B cell (primary cell): ENCODE measurements at regions of chr2 and their contacts with region 1.

Region 1: DNA sequence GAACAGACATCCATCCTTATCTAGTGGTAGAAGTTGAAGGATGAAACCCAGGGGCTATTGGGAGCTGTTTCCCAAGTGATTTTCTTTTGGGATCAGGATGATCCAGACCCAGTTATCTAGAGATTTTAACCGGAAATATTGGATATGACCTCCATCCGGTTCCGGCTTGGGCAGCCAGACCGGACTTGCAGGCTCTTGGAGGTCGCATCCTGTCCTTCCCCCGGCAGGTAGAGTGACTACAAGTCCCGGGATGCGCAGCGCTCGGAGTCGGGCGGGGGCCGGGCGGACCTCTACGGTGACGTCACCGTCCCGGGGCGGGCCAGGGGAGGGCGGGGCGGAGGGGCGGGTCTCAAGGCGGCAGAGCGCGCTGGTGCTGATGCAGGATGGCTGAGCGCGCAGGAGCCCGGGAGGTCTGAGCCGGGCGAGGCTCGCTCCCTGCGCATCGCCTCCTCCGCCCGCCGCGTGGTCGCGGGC is at the start of gene KIF5C:
- DNase-seq: peak; percentile 88
- ATAC-seq: peak; percentile 92
- H3K4me3 ChIP-seq: peak within 1 kb of the TSS in 4 of 5 experiments; percentile 37 to 67 (median 58)
- H3K4me3 Mint-ChIP-seq: peak within 1 kb of the TSS; percentile 86
- H3K27ac ChIP-seq: no peak within 1 kb of the TSS
- H3K27ac Mint-ChIP-seq: peak within 1 kb of the TSS; percentile 32
- H3K4me1 ChIP-seq: peaks cover 18 to 24% of the 10 kb centered on the region in 2 donors
- H3K4me1 Mint-ChIP-seq: peaks cover 16% of the 10 kb centered on the region
- H3K27me3 ChIP-seq: peaks cover 0 to 38% (median 14%) of the 10 kb centered on the region in 4 experiments
- H3K27me3 Mint-ChIP-seq: peaks cover 43% of the 10 kb centered on the region
- CTCF ChIP-seq: no peak
- total RNA-seq, gene KIF5C: 6.0 and 6.1 TPM in 2 replicates

Region 2: DNA sequence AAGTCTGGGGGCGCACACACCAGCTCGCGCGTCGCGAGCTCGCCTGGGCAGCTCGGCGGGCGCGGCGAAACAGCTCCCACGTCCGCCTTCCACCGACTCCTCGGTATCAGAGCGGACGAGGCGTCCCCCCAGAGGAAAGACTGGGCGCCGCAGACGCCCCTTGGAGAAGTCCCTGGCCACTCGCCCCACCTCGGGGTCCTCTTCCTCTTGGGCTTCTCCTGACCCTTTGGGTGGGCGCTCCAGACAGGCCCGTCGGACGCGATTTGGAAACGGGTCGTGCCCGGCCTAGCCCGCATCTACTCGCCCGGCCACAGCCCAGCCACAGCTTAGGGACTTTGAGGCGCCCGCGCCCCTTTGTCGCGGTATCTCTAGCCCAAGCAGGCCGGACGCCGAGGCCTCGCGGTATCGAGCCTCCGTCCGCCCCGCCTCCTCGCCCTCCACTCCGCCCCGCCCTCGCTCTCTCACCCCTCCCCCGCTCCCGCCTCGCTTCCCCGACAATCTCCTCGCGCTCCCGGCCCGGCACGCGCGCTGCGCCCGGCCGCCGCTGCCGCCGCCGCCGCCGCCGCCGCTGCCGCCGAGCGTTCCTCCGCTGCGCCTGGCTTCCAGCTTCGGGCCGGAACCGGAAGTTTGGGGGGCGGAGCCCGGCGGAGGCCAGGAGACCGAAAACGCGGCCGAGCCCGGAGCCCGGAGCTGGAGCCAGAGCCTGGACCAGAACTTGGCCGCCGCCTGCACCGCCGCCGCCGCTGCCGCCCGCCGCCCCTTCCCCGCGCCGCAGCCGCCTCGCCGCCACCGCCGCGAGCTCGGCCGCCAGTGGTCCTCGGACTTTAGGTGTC is 1030.8 kb before region 1 on chr2:
- CTCF ChIA-PET with region 1: no interaction called
- POLR2A ChIA-PET with region 1: no interaction called
- intact Hi-C with region 1: loop called (anchors 5 kb)
- DNase-seq: peak; percentile 91
- ATAC-seq: peak; percentile 87
- H3K4me3 ChIP-seq: peak overlapping the region; percentile 11 to 89 (median 69)
- H3K4me3 Mint-ChIP-seq: peak overlapping the region; percentile 95
- H3K27ac ChIP-seq: peak overlapping the region; percentile 29 to 56
- H3K27ac Mint-ChIP-seq: peak overlapping the region; percentile 86
- H3K4me1 ChIP-seq: peaks cover 19 to 21% of the 10 kb centered on the region in 2 donors
- H3K4me1 Mint-ChIP-seq: peaks cover 27% of the 10 kb centered on the region
- H3K27me3 ChIP-seq: peaks cover 0 to 29% (median 26%) of the 10 kb centered on the region in 4 experiments
- H3K27me3 Mint-ChIP-seq: peaks cover 51% of the 10 kb centered on the region
- CTCF ChIP-seq: no peak

Region 3: DNA sequence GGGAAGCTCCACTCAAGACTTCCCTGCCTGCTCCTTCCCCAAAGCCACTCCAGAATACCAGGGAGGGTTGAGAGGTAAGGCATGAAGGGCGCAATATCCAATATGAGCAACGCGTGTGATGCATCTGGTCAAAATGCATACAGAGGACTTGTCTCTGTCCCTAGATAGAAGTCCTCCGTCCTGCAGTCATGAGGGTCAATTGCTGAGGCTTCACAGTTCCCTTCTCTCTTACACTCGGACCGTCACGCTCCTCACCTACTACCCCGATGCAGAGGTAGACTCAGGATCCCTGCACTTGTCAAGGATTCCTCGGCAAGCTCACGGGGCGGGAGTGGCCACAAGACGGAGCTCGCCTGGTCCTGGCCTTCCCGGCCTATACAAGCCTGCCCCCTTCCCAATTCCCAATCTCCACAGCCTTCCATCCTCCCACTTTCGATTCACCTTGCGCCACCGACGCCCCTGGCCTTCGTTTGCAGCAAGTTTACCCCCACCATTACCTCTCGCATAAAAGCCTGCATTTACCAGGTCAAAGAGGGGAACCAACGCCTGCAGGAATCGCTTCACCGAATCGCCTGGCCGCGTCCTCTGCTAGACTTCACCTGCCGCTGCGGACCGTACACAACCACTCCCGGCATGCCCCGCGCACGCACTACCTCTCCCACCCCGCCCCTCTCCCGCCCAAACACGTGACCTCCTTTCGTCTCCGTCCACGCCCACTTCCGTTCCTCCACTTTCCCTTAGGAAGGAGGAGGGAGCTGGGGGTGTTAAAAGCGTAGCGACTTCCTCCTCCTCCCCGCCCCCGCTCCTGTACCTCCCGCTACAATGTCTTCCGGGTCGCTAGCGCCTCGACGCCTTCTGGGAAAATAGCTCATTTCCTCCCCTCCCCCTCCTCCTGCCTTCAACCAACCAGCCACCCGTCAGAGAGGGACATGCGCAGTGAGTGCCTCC is 854.5 kb before region 1 on chr2 and contains the start of gene ORC4:
- CTCF ChIA-PET with region 1: no interaction called
- POLR2A ChIA-PET with region 1: no interaction called
- intact Hi-C with region 1: loop called (anchors 1 kb)
- DNase-seq: peak; percentile 99
- ATAC-seq: peak; percentile 89
- H3K4me3 ChIP-seq: peak within 1 kb of the TSS; percentile 79 to 95 (median 80)
- H3K4me3 Mint-ChIP-seq: peak within 1 kb of the TSS; percentile 99
- H3K27ac ChIP-seq: peak within 1 kb of the TSS; percentile 91 to 92
- H3K27ac Mint-ChIP-seq: peak within 1 kb of the TSS; percentile 94
- H3K4me1 ChIP-seq: peaks cover 23 to 37% of the 10 kb centered on the region in 2 donors
- H3K4me1 Mint-ChIP-seq: peaks cover 52% of the 10 kb centered on the region
- H3K27me3 ChIP-seq: no peaks in the 10 kb centered on the region
- H3K27me3 Mint-ChIP-seq: no peaks in the 10 kb centered on the region
- CTCF ChIP-seq: no peak
- total RNA-seq, gene ORC4: 44.3 and 48.9 TPM in 2 replicates

Region 4: DNA sequence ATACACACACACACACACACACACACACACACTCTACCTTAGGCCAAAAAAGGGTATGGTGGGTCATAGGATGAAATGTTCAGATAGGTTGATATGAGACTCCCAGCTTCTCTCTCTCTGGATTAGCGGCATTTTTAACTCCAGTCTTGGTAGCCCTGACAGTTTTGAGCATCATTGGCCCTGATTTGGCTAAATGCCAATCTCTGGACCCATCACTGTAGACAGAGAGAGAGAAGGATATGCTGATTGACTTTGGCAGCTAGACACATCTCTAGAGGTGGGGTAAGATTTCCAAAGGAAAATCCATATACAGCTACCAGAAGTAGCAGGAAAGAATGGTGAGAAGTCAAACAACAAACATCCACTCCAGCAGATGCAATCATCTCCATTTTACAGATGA is 544.8 kb before region 1 on chr2:
- CTCF ChIA-PET with region 1: no interaction called
- POLR2A ChIA-PET with region 1: no interaction called
- intact Hi-C with region 1: no loop called
- DNase-seq: no peak
- ATAC-seq: no peak
- H3K4me3 ChIP-seq: no peak overlapping the region
- H3K4me3 Mint-ChIP-seq: no peak overlapping the region
- H3K27ac ChIP-seq: no peak overlapping the region
- H3K27ac Mint-ChIP-seq: no peak overlapping the region
- H3K4me1 ChIP-seq: no peaks in the 10 kb centered on the region
- H3K4me1 Mint-ChIP-seq: no peaks in the 10 kb centered on the region
- H3K27me3 ChIP-seq: no peaks in the 10 kb centered on the region
- H3K27me3 Mint-ChIP-seq: no peaks in the 10 kb centered on the region
- CTCF ChIP-seq: no peak

Region 5: DNA sequence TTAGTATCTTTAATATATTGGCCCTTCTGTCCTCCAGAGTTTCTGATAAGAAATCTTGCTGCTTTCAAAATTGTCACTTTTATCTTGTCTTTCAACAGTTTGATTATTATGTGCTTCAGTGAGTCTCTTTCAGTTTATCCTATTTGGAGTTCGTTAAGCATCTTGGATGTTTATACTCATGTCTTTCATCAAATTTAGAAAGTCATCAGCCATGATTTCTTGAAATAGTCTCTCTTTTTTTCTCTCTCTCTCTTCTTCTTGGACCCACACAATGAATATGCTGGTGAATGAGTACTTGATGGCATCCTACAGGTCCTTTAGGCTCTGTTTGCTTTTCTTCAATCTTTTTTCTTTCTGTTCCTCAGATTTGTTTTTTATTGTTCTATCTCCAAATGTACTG is 26.8 kb before region 1 on chr2:
- CTCF ChIA-PET with region 1: no interaction called
- POLR2A ChIA-PET with region 1: no interaction called
- intact Hi-C with region 1: no loop called
- DNase-seq: no peak
- ATAC-seq: no peak
- H3K4me3 ChIP-seq: no peak overlapping the region
- H3K4me3 Mint-ChIP-seq: no peak overlapping the region
- H3K27ac ChIP-seq: no peak overlapping the region
- H3K27ac Mint-ChIP-seq: no peak overlapping the region
- H3K4me1 ChIP-seq: no peaks in the 10 kb centered on the region
- H3K4me1 Mint-ChIP-seq: no peaks in the 10 kb centered on the region
- H3K27me3 ChIP-seq: peaks cover 0 to 10% (median 6%) of the 10 kb centered on the region in 4 experiments
- H3K27me3 Mint-ChIP-seq: peaks cover 55% of the 10 kb centered on the region
- CTCF ChIP-seq: no peak

Region 6: GRCh38 chr2:148926291-148926961 is 51.5 kb after region 1 on chr2:
- CTCF ChIA-PET with region 1: no interaction called
- POLR2A ChIA-PET with region 1: no interaction called
- intact Hi-C with region 1: loop called (anchors 2 kb)
- DNase-seq: peak; percentile 67
- ATAC-seq: peak; percentile 81
- H3K4me3 ChIP-seq: peak overlapping the region; percentile 23 to 69 (median 50)
- H3K4me3 Mint-ChIP-seq: peak overlapping the region; percentile 81
- H3K27ac ChIP-seq: peak overlapping the region in 1 of 2 donors; percentile 13
- H3K27ac Mint-ChIP-seq: peak overlapping the region; percentile 62
- H3K4me1 ChIP-seq: peaks cover 7 to 22% of the 10 kb centered on the region in 2 donors
- H3K4me1 Mint-ChIP-seq: peaks cover 18% of the 10 kb centered on the region
- H3K27me3 ChIP-seq: no peaks in the 10 kb centered on the region
- H3K27me3 Mint-ChIP-seq: no peaks in the 10 kb centered on the region
- CTCF ChIP-seq: peak; percentile 80

Region 7: GRCh38 chr2:149098701-149099100 is 223.8 kb after region 1 on chr2:
- CTCF ChIA-PET with region 1: no interaction called
- POLR2A ChIA-PET with region 1: no interaction called
- intact Hi-C with region 1: no loop called
- DNase-seq: no peak
- ATAC-seq: no peak
- H3K4me3 ChIP-seq: no peak overlapping the region
- H3K4me3 Mint-ChIP-seq: no peak overlapping the region
- H3K27ac ChIP-seq: no peak overlapping the region
- H3K27ac Mint-ChIP-seq: no peak overlapping the region
- H3K4me1 ChIP-seq: no peaks in the 10 kb centered on the region
- H3K4me1 Mint-ChIP-seq: no peaks in the 10 kb centered on the region
- H3K27me3 ChIP-seq: no peaks in the 10 kb centered on the region
- H3K27me3 Mint-ChIP-seq: peaks cover 3% of the 10 kb centered on the region
- CTCF ChIP-seq: no peak